GM12878 (cell line): ENCODE measurements at regions of chr1 and their contacts with region 1.

Region 1: DNA sequence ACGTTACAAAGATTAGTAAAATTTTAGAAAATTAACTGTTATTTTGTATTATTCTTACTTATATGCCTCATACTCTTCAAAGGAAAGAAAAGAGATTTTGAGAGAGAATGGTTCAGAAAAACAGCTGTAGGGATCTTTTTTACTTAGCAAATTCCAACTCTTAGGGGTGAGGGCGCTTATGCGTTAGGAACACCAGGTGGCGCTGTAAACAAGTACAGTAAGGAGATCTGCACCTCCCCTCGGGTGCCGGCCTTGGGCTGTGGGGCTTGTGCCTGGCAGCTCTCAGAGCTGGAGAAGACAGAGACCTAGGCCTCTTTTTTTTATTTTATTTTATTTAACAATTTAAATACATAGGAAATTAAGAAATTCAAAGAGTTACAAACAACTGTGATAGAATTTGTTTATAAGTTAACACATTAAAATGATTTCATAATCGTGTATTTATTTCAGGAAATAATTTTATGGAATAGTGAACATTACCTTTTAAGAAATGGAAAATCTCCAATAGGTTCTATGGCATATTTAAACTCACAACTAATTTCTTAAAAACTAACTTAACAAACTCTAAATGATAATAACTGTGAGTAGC is 32.6 kb downstream of the UTP25 start:
- DNase-seq: no peak
- ATAC-seq: peak; percentile 100
- H3K4me3 ChIP-seq: no peak overlapping the region
- H3K27ac ChIP-seq: no peak overlapping the region
- H3K4me1 ChIP-seq: no peaks in the 10 kb centered on the region
- H3K27me3 ChIP-seq: no peaks in the 10 kb centered on the region; a peak in 1 of 4 replicates
- CTCF ChIP-seq: peak; percentile 77 to 84 (median 83)
- EP300 ChIP-seq: no peak
- POLR2A ChIP-seq: no peak
- RAD21 ChIP-seq: peak; percentile 66

Region 2: DNA sequence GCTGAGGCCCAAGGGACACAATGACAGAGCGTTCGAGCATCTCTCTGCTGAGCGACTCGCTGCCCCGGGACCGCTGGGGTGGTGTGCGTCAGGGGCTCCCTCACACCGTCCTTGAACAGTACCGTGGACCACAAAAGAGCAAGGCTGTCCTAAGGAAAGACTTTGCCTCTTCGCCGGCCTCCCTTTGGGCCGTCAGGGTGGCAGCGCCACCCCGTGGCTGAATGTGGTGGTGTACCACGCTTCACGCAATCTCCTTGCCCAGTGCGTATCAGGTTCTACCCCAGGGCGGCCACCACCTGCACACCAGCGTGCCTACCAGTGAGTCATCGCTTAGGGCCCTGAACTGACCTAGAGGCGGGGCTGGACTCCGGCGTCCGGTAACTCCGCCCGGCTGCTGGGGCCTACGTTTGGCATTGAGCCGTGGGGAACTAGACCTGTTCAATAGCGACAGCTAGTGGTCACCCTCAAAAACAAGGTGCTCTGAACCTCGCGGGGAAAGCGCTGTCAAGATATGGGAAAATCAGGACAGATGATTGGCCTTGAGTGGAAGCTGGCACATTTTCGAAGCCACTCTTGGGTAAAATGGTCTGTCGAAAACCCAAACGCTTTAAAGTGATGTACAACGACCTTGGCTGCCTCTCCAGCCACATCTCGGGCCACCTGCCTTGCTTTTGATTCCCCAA is 112.7 kb before region 1 on chr1:
- CTCF ChIA-PET with region 1: no interaction called
- POLR2A ChIA-PET with region 1: no interaction called
- RAD21 ChIA-PET with region 1: no interaction called
- SMC1A ChIA-PET with region 1: no interaction called
- in situ Hi-C with region 1: no loop called
- intact Hi-C with region 1: no loop called
- DNase-seq: peak; percentile 82
- ATAC-seq: peak; percentile 94
- H3K4me3 ChIP-seq: peak overlapping the region; percentile 21; the same call in 1 of the 2 replicates
- H3K27ac ChIP-seq: no peak overlapping the region
- H3K4me1 ChIP-seq: peaks cover 36% of the 10 kb centered on the region
- H3K27me3 ChIP-seq: no peaks in the 10 kb centered on the region
- CTCF ChIP-seq: peak; percentile 59 to 96 (median 78); a peak in 5 of 6 replicates
- EP300 ChIP-seq: peak; percentile 22 to 25; a peak in 1 of 4 replicates
- POLR2A ChIP-seq: no peak
- RAD21 ChIP-seq: peak; percentile 67

Region 3: GRCh38 chr1:209989525-209989924 is 129.1 kb after region 1 on chr1:
- CTCF ChIA-PET with region 1: interaction called, 24 read pairs
- POLR2A ChIA-PET with region 1: no interaction called
- RAD21 ChIA-PET with region 1: interaction called, 4 read pairs
- SMC1A ChIA-PET with region 1: interaction called, 5 read pairs
- in situ Hi-C with region 1: loop called (anchors 5 kb)
- intact Hi-C with region 1: loop called (anchors 1 kb)
- DNase-seq: no peak
- ATAC-seq: peak; percentile 59; the same call in 2 of the 3 replicates
- H3K4me3 ChIP-seq: no peak overlapping the region
- H3K27ac ChIP-seq: no peak overlapping the region
- H3K4me1 ChIP-seq: no peaks in the 10 kb centered on the region
- H3K27me3 ChIP-seq: no peaks in the 10 kb centered on the region; a peak in 1 of 4 replicates
- CTCF ChIP-seq: no peak; a peak in 1 of 6 replicates
- EP300 ChIP-seq: no peak
- POLR2A ChIP-seq: no peak
- RAD21 ChIP-seq: no peak

Region 4: DNA sequence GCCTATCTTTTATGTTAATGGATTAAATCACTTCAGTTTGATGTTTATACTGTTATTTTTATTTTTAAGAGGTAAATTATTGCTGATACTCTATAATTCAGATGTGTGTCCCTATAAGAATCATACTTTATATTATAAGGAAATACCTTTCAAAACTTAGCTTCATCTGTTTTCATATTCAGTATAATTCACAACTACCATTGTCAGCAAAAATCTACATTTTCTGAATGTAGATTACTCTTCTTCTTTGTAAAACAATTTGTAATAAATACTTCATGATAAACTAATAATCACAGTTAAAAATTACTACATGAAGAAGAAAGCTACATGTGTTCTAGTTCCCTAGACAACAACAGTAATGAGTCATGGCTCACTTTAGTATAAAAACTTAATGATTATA is 256.8 kb after region 1 on chr1:
- CTCF ChIA-PET with region 1: no interaction called
- POLR2A ChIA-PET with region 1: no interaction called
- RAD21 ChIA-PET with region 1: no interaction called
- SMC1A ChIA-PET with region 1: no interaction called
- in situ Hi-C with region 1: no loop called
- intact Hi-C with region 1: no loop called
- DNase-seq: no peak
- ATAC-seq: no peak
- H3K4me3 ChIP-seq: no peak overlapping the region
- H3K27ac ChIP-seq: no peak overlapping the region
- H3K4me1 ChIP-seq: no peaks in the 10 kb centered on the region
- H3K27me3 ChIP-seq: no peaks in the 10 kb centered on the region
- CTCF ChIP-seq: no peak
- EP300 ChIP-seq: no peak
- POLR2A ChIP-seq: no peak
- RAD21 ChIP-seq: no peak